Ascending aorta (tissue), 2 donors: ENCODE measurements at regions of chr10 and their contacts with region 1.

Region 1: GRCh38 chr10:133373104-133373624 is at the start of gene ECHS1:
- DNase-seq: peak; percentile 83 to 97
- H3K4me3 ChIP-seq: peak within 1 kb of the TSS; percentile 66 to 92
- H3K27ac ChIP-seq: peak within 1 kb of the TSS; percentile 73 to 88
- H3K4me1 ChIP-seq: peaks cover 4 to 12% of the 10 kb centered on the region in 2 donors
- H3K27me3 ChIP-seq: no peaks in the 10 kb centered on the region
- CTCF ChIP-seq: no peak
- total RNA-seq, gene ECHS1: 68.0 TPM

Region 2: GRCh38 chr10:132961787-132962622 is 411.2 kb before region 1 on chr10:
- intact Hi-C with region 1: no loop called
- DNase-seq: no peak
- H3K4me3 ChIP-seq: peak overlapping the region; percentile 67 to 72
- H3K27ac ChIP-seq: no peak overlapping the region
- H3K4me1 ChIP-seq: peaks cover 0 to 2% of the 10 kb centered on the region in 2 donors
- H3K27me3 ChIP-seq: no peaks in the 10 kb centered on the region
- CTCF ChIP-seq: no peak

Region 3: GRCh38 chr10:133309111-133309719 is 63.9 kb before region 1 on chr10:
- intact Hi-C with region 1: loop called (anchors 1 kb)
- DNase-seq: peak; percentile 72 to 94
- H3K4me3 ChIP-seq: peak overlapping the region; percentile 92 to 93
- H3K27ac ChIP-seq: peak overlapping the region; percentile 87 to 91
- H3K4me1 ChIP-seq: peaks cover 2 to 25% of the 10 kb centered on the region in 2 donors
- H3K27me3 ChIP-seq: no peaks in the 10 kb centered on the region
- CTCF ChIP-seq: no peak

Region 4: GRCh38 chr10:133329491-133330202 is 43.5 kb before region 1 on chr10:
- intact Hi-C with region 1: loop called (anchors 5 kb)
- DNase-seq: peak in 1 of 2 donors; percentile 86
- H3K4me3 ChIP-seq: peak overlapping the region; percentile 34 to 55
- H3K27ac ChIP-seq: no peak overlapping the region
- H3K4me1 ChIP-seq: peaks cover 8 to 11% of the 10 kb centered on the region in 2 donors
- H3K27me3 ChIP-seq: peaks cover 19% of the 10 kb centered on the region
- CTCF ChIP-seq: peak; percentile 73 to 99 (median 97)

Region 5: GRCh38 chr10:133357285-133358151 is 15.6 kb before region 1 on chr10 and contains the start of gene FUOM:
- intact Hi-C with region 1: loop called (anchors 1 kb)
- DNase-seq: peak in 1 of 2 donors; percentile 79
- H3K4me3 ChIP-seq: peak within 1 kb of the TSS; percentile 72 to 81
- H3K27ac ChIP-seq: peak within 1 kb of the TSS; percentile 46
- H3K4me1 ChIP-seq: peaks cover 6 to 12% of the 10 kb centered on the region in 2 donors
- H3K27me3 ChIP-seq: no peaks in the 10 kb centered on the region
- CTCF ChIP-seq: no peak
- total RNA-seq, gene FUOM: 38.5 TPM

Region 6: GRCh38 chr10:133394064-133394663 is 21.0 kb after region 1 on chr10 and contains the start of gene MTG1:
- intact Hi-C with region 1: loop called (anchors 1 kb)
- DNase-seq: peak; percentile 58 to 95
- H3K4me3 ChIP-seq: peak within 1 kb of the TSS; percentile 85 to 97
- H3K27ac ChIP-seq: peak within 1 kb of the TSS; percentile 68 to 82
- H3K4me1 ChIP-seq: peaks cover 0 to 14% of the 10 kb centered on the region in 2 donors
- H3K27me3 ChIP-seq: no peaks in the 10 kb centered on the region
- CTCF ChIP-seq: peak in 2 of 3 experiments; percentile 22 to 30
- total RNA-seq, gene MTG1: 37.8 TPM